Naive thymus-derived CD4-positive, alpha-beta T cell (primary cell): ENCODE measurements at regions of chr19 and their contacts with region 1.

Region 1: DNA sequence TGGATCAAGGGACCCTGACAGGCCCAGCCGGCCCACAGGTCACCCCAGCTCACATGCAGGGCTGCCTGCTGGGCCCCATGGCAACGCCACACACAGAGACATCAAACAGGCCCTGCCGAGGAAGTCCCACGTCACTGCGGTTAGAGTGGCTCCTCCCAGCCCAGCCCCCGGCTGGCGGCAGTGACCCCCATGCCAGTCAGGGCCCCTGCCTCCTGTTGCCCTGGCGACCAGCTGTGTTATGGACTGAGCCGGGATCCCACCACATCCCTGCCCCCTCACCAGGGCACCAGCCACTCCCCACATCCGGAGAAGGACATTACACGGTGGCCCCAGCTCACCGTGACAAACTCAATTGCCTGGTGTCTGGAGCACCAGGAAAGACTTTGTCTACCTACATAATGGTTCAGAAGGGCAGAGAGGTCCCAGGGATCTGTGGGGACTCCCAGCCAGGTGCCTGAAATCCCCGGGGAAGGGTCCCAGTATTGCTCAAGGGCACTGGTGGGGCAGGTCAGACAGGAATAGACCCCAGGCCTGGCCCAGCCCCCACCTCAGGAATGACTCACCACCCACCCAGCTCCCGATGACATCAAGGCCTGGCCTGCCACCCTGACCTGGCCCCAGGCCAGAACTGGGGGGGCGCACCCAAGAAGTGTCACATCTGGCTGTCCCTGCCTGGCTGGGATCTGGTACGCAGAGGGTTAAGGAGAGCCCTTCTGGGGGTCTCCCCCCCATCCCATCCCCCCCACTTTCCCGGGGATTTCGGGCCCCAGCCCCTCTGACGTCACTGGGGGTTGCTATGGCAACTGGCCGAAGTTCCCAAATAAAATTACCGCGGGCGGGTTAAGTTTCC is 30.2 kb upstream of the NANOS3 start:
- DNase-seq: peak; percentile 91 to 98 (median 97)
- ATAC-seq: peak; percentile 75
- H3K4me3 ChIP-seq: peak overlapping the region; percentile 72
- H3K4me3 Mint-ChIP-seq: peak overlapping the region; percentile 82 to 96 (median 90)
- H3K27ac ChIP-seq: peak overlapping the region; percentile 95
- H3K27ac Mint-ChIP-seq: peak overlapping the region; percentile 99 to 100 (median 100)
- H3K4me1 ChIP-seq: peaks cover 47 to 55% of the 10 kb centered on the region in 2 donors
- H3K4me1 Mint-ChIP-seq: peaks cover 19 to 62% (median 55%) of the 10 kb centered on the region in 7 donors
- H3K27me3 ChIP-seq: no peaks in the 10 kb centered on the region
- H3K27me3 Mint-ChIP-seq: peaks cover 0 to 3% (median 0%) of the 10 kb centered on the region in 5 donors

Region 2: DNA sequence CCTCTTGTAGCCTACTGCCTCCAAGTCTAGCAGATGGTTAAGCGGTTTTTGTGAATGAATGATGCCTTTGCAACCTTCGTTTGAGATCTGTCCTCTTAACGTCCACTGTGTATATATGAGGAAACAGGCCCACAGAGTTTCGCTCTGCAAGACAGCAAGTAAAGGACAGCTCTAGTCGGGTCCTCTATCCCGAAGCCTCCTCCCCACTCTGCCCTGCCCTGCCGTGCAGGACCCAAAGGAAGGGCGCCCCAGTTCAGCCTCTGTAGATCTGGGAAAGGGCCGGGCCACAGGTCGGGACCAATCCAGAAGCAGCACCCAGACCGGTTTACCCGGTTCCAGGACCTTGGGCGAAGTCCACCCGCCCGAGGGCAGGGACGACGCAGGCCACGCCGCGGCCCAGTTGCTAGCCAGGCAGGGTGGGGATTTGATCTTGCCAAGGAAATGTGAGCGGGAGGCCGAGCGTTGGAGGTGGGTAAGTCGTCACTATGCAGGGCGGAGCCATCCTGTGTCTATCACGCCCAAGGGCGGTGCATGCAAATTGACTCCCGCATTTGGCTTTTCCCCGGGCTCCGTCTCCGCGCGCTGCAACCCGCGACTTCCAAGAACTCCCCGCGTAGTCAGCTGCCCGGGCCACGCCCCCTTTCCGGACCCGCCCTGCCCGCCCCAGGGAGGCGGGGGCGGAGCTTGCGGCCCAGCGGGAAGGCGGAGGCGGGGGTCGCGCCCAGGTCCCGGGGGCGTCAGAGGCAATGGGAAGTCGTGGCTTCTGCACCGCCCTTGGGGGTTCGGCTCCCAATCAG is 684.1 kb before region 1 on chr19:
- CTCF ChIA-PET with region 1: no interaction called
- POLR2A ChIA-PET with region 1: no interaction called
- intact Hi-C with region 1: loop called in 1 of 2 experiments (anchors 2 kb)
- DNase-seq: peak; percentile 46 to 91 (median 75)
- ATAC-seq: peak; percentile 73
- H3K4me3 ChIP-seq: peak overlapping the region; percentile 60
- H3K4me3 Mint-ChIP-seq: peak overlapping the region; percentile 85 to 94 (median 90)
- H3K27ac ChIP-seq: peak overlapping the region; percentile 90
- H3K27ac Mint-ChIP-seq: peak overlapping the region; percentile 92 to 99 (median 97)
- H3K4me1 ChIP-seq: peaks cover 54 to 73% of the 10 kb centered on the region in 2 donors
- H3K4me1 Mint-ChIP-seq: peaks cover 26 to 87% (median 67%) of the 10 kb centered on the region in 7 donors
- H3K27me3 ChIP-seq: no peaks in the 10 kb centered on the region
- H3K27me3 Mint-ChIP-seq: no peaks in the 10 kb centered on the region

Region 3: DNA sequence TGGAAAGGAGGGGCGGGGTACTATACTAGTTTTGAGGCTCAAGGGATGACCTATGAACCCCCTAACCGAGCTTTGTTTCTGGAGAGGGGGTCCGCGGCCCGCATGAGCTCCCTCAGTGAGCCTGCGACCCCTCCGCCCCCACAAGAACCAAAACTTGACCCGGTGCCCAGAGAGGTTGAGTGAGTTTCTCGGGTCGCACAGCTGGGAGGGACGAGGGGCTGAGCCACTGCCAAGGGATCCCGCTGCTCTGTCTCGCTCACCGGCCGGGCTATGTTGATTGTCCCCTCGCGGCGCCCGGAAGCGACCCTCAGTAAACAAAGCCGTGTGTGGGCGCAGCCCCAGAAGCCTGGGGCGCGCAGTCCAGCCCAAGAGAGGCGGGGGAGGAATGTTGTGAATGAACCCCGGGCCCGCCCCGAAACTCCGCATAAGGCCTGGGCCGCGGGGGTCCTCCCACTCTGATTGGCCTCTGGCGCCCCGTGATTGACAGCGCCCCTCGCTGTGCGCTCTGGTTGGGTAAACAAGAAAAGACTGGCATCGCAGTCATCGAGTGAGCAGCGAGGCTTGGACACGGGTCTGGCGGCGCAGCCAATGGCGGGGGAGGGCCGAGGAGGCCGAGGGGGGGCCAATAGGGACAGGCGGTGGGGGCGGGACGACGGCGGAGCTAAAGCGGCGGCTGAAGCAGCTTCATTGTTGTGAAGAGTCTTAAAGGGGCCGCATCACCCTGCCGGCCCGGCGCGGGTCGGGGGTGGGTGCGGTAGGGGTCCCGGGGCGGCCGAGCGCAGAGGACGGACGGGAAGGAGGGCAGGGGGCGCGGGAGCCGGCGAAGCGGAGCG is 51.8 kb before region 1 on chr19 and contains the start of gene ZSWIM4:
- CTCF ChIA-PET with region 1: no interaction called
- POLR2A ChIA-PET with region 1: interaction called, 9 read pairs
- intact Hi-C with region 1: loop called in 1 of 2 experiments (anchors 1 kb)
- DNase-seq: peak; percentile 67 to 93 (median 77)
- ATAC-seq: peak; percentile 95
- H3K4me3 ChIP-seq: peak within 1 kb of the TSS; percentile 84
- H3K4me3 Mint-ChIP-seq: peak within 1 kb of the TSS; percentile 93 to 97 (median 94)
- H3K27ac ChIP-seq: peak within 1 kb of the TSS; percentile 56
- H3K27ac Mint-ChIP-seq: peak within 1 kb of the TSS; percentile 89 to 97 (median 95)
- H3K4me1 ChIP-seq: peaks cover 14 to 21% of the 10 kb centered on the region in 2 donors
- H3K4me1 Mint-ChIP-seq: peaks cover 22 to 46% (median 37%) of the 10 kb centered on the region in 7 donors
- H3K27me3 ChIP-seq: no peaks in the 10 kb centered on the region
- H3K27me3 Mint-ChIP-seq: no peaks in the 10 kb centered on the region
- total RNA-seq, gene ZSWIM4: 4.8 to 7.8 (median 5.9) TPM

Region 4: GRCh38 chr19:14366498-14366915 is 519.7 kb after region 1 on chr19:
- CTCF ChIA-PET with region 1: no interaction called
- POLR2A ChIA-PET with region 1: no interaction called
- intact Hi-C with region 1: loop called in 1 of 2 experiments (anchors 1 kb)
- DNase-seq: peak; percentile 76 to 96 (median 93)
- ATAC-seq: peak; percentile 68
- H3K4me3 ChIP-seq: peak overlapping the region; percentile 44
- H3K4me3 Mint-ChIP-seq: peak overlapping the region; percentile 54 to 90 (median 78)
- H3K27ac ChIP-seq: peak overlapping the region; percentile 99
- H3K27ac Mint-ChIP-seq: peak overlapping the region; percentile 93 to 100 (median 98)
- H3K4me1 ChIP-seq: peaks cover 55 to 80% of the 10 kb centered on the region in 2 donors
- H3K4me1 Mint-ChIP-seq: peaks cover 53 to 81% (median 65%) of the 10 kb centered on the region in 7 donors
- H3K27me3 ChIP-seq: no peaks in the 10 kb centered on the region
- H3K27me3 Mint-ChIP-seq: no peaks in the 10 kb centered on the region

Region 5: GRCh38 chr19:14529254-14530004 is 682.6 kb after region 1 on chr19 and contains the start of gene TECR:
- CTCF ChIA-PET with region 1: no interaction called
- POLR2A ChIA-PET with region 1: no interaction called
- intact Hi-C with region 1: loop called (anchors 2 to 10 kb)
- DNase-seq: peak; percentile 98 to 100 (median 100)
- ATAC-seq: peak; percentile 96
- H3K4me3 ChIP-seq: peak within 1 kb of the TSS; percentile 96
- H3K4me3 Mint-ChIP-seq: peak within 1 kb of the TSS; percentile 88 to 97 (median 95)
- H3K27ac ChIP-seq: peak within 1 kb of the TSS; percentile 89
- H3K27ac Mint-ChIP-seq: peak within 1 kb of the TSS; percentile 95 to 100 (median 98)
- H3K4me1 ChIP-seq: peaks cover 22 to 30% of the 10 kb centered on the region in 2 donors
- H3K4me1 Mint-ChIP-seq: peaks cover 9 to 72% (median 54%) of the 10 kb centered on the region in 7 donors
- H3K27me3 ChIP-seq: no peaks in the 10 kb centered on the region
- H3K27me3 Mint-ChIP-seq: no peaks in the 10 kb centered on the region
- total RNA-seq, gene TECR: 123 to 218 (median 150) TPM